HCT116 (cell line): ENCODE measurements at regions of chr4 and their contacts with region 1.

Region 1: GRCh38 chr4:30839583-30840520 is 119.7 kb downstream of the PCDH7 start:
- DNase-seq: peak; percentile 97
- ATAC-seq: peak; percentile 77
- H3K4me3 ChIP-seq: peak overlapping the region in 1 of 2 experiments; percentile 18; a peak in 1 of 4 replicates
- H3K27ac ChIP-seq: peak overlapping the region; percentile 100
- H3K4me1 ChIP-seq: peaks cover 83 to 99% of the 10 kb centered on the region in 2 experiments
- H3K27me3 ChIP-seq: no peaks in the 10 kb centered on the region
- CTCF ChIP-seq: no peak
- POLR2A ChIP-seq: no peak
- RAD21 ChIP-seq: peak; percentile 22; the same call in 1 of the 2 replicates

Region 2: GRCh38 chr4:30642567-30642966 is 197.3 kb before region 1 on chr4:
- CTCF ChIA-PET with region 1: no interaction called
- POLR2A ChIA-PET with region 1: no interaction called
- RAD21 ChIA-PET with region 1: no interaction called
- intact Hi-C with region 1: no loop called
- DNase-seq: peak; percentile 18
- ATAC-seq: 0 out of 2 replicates have a peak, but pooled peaks have one; percentile 46
- H3K4me3 ChIP-seq: no peak overlapping the region
- H3K27ac ChIP-seq: peak overlapping the region; percentile 17; the same call in 1 of the 2 replicates
- H3K4me1 ChIP-seq: peaks cover 9 to 11% of the 10 kb centered on the region in 2 experiments
- H3K27me3 ChIP-seq: no peaks in the 10 kb centered on the region
- CTCF ChIP-seq: no peak
- POLR2A ChIP-seq: no peak
- RAD21 ChIP-seq: no peak

Region 3: DNA sequence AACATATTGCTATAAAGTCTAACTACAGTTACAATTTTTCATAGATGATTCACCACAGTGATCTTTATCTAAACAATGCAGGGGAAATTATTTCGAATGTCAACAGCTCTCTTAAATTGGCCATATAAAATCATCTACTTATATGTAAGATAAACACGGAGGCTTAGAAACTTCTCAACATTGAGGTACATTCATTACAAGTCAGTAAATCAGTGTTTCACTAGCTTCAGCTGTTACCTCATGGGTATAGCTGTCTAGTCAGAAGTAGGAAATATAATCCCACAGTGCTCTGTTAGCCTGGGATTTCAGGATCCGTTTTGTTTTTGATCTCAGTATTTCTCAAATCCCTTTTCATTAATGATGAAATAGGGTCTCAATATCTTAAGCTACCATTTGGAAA is 76.5 kb before region 1 on chr4:
- CTCF ChIA-PET with region 1: no interaction called
- POLR2A ChIA-PET with region 1: interaction called, 28 read pairs
- RAD21 ChIA-PET with region 1: interaction called in 1 of 2 experiments, 3 read pairs
- intact Hi-C with region 1: no loop called
- DNase-seq: no peak
- ATAC-seq: peak; percentile 34
- H3K4me3 ChIP-seq: no peak overlapping the region
- H3K27ac ChIP-seq: peak overlapping the region; percentile 100
- H3K4me1 ChIP-seq: peaks cover 66 to 97% of the 10 kb centered on the region in 2 experiments
- H3K27me3 ChIP-seq: no peaks in the 10 kb centered on the region
- CTCF ChIP-seq: no peak
- POLR2A ChIP-seq: no peak
- RAD21 ChIP-seq: peak; percentile 13; the same call in 1 of the 2 replicates

Region 4: GRCh38 chr4:30821859-30822612 is 17.8 kb before region 1 on chr4:
- CTCF ChIA-PET with region 1: no interaction called
- POLR2A ChIA-PET with region 1: interaction called, 17 read pairs
- RAD21 ChIA-PET with region 1: no interaction called
- intact Hi-C with region 1: no loop called
- DNase-seq: peak; percentile 94
- ATAC-seq: peak; percentile 89
- H3K4me3 ChIP-seq: peak overlapping the region; percentile 29 to 48
- H3K27ac ChIP-seq: peak overlapping the region; percentile 100
- H3K4me1 ChIP-seq: peaks cover 78 to 99% of the 10 kb centered on the region in 2 experiments
- H3K27me3 ChIP-seq: no peaks in the 10 kb centered on the region
- CTCF ChIP-seq: no peak
- POLR2A ChIP-seq: peak; percentile 24
- RAD21 ChIP-seq: peak; percentile 25; the same call in 1 of the 2 replicates

Region 5: GRCh38 chr4:30854531-30854930 is 14.7 kb after region 1 on chr4:
- CTCF ChIA-PET with region 1: interaction called, 3 read pairs
- POLR2A ChIA-PET with region 1: interaction called, 10 read pairs
- RAD21 ChIA-PET with region 1: interaction called in 1 of 2 experiments, 3 read pairs
- intact Hi-C with region 1: no loop called
- DNase-seq: peak; percentile 70
- ATAC-seq: peak; percentile 62
- H3K4me3 ChIP-seq: 0 out of 4 replicates have a peak overlapping the region, but pooled peaks of 1 of the 2 experiments have one; percentile 7
- H3K27ac ChIP-seq: peak overlapping the region; percentile 100
- H3K4me1 ChIP-seq: peaks cover 69 to 96% of the 10 kb centered on the region in 2 experiments
- H3K27me3 ChIP-seq: no peaks in the 10 kb centered on the region
- CTCF ChIP-seq: no peak
- POLR2A ChIP-seq: no peak
- RAD21 ChIP-seq: no peak

Region 6: DNA sequence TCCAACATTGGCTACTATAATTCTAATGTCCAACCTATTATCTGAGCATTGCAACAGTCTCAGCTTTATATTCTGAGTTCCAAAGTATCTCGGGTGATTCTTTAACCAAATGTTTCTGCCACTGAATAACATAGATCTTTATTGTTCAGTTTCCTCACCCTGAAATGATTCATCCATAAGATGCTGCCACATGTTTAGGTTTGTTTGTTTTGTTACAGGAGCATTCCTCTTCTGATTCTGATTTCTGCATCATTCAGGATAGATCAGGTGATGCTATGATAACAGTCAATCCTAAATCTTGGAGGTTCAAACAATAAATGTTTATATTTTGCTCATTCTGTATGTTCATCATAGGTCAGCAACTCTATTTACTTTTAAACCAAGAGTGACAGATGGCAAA is 807.9 kb after region 1 on chr4:
- CTCF ChIA-PET with region 1: no interaction called
- POLR2A ChIA-PET with region 1: no interaction called
- RAD21 ChIA-PET with region 1: no interaction called
- intact Hi-C with region 1: no loop called
- DNase-seq: no peak
- ATAC-seq: no peak
- H3K4me3 ChIP-seq: no peak overlapping the region
- H3K27ac ChIP-seq: no peak overlapping the region
- H3K4me1 ChIP-seq: no peaks in the 10 kb centered on the region
- H3K27me3 ChIP-seq: no peaks in the 10 kb centered on the region
- CTCF ChIP-seq: no peak
- POLR2A ChIP-seq: no peak
- RAD21 ChIP-seq: no peak